CD8-positive, alpha-beta memory T cell (primary cell): ENCODE measurements at regions of chr5 and their contacts with region 1.

Region 1: DNA sequence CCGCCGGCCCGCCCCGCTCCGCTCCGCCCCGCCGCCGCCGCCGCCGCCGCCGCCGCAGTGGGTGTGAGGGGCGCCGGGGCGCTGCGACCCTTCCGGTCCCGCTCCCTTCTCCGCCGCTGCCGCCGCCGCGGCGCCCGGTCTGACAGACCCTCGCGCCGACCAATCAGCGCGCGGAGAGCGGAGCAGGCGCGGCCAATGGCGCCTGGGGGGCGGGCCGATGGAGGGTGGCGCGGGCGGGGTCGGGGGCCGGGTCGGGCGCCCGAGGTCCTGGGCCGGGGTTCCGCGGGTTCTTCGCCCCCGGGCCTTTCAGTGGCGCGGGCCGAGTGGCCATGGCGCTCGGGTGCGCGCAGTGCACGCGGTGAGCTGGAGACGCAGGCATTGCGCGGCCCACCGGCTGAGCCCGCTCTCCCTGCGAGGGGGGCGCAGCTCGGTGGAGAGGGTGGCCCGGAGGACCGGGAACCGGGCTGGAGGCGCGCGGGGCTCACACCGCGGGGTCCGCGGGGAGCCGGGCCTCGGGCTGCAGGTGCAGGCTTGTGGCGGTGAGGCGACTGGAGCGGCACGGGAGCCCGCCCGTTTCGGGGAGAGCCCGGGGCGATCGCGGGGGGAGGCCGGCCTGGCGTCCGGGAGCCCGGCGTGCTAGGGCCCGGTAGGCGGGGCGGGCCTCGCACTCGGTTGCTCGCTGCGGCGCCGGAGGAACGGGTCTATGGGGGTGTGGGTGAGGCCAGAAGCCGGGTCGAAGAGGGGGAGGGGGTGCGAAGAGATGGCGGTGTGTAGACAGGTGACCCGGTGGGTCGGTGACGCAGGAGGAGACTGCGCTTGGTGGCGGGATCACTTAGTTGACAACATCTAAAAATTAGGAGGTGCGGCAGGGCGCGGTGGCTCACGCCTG is at the start of gene MAPK9:
- DNase-seq: peak; percentile 82 to 92 (median 85)
- H3K4me3 ChIP-seq: peak within 1 kb of the TSS; percentile 59
- H3K4me3 Mint-ChIP-seq: peak within 1 kb of the TSS; percentile 93 to 99 (median 97)
- H3K27ac ChIP-seq: peak within 1 kb of the TSS; percentile 84
- H3K27ac Mint-ChIP-seq: peak within 1 kb of the TSS; percentile 97 to 100 (median 99)
- H3K4me1 ChIP-seq: peaks cover 29% of the 10 kb centered on the region
- H3K4me1 Mint-ChIP-seq: peaks cover 40 to 75% (median 64%) of the 10 kb centered on the region in 3 donors
- H3K27me3 ChIP-seq: no peaks in the 10 kb centered on the region
- H3K27me3 Mint-ChIP-seq: peaks cover 0 to 1% of the 10 kb centered on the region in 2 donors
- total RNA-seq, gene MAPK9: 44.3 to 46.2 TPM

Region 2: GRCh38 chr5:180253036-180253824 is 39.0 kb before region 1 on chr5:
- CTCF ChIA-PET with region 1: no interaction called
- POLR2A ChIA-PET with region 1: no interaction called
- DNase-seq: no peak
- H3K4me3 ChIP-seq: no peak overlapping the region
- H3K4me3 Mint-ChIP-seq: no peak overlapping the region
- H3K27ac ChIP-seq: no peak overlapping the region
- H3K27ac Mint-ChIP-seq: no peak overlapping the region
- H3K4me1 ChIP-seq: no peaks in the 10 kb centered on the region
- H3K4me1 Mint-ChIP-seq: no peaks in the 10 kb centered on the region
- H3K27me3 ChIP-seq: no peaks in the 10 kb centered on the region
- H3K27me3 Mint-ChIP-seq: peaks cover 0 to 1% of the 10 kb centered on the region in 2 donors

Region 3: DNA sequence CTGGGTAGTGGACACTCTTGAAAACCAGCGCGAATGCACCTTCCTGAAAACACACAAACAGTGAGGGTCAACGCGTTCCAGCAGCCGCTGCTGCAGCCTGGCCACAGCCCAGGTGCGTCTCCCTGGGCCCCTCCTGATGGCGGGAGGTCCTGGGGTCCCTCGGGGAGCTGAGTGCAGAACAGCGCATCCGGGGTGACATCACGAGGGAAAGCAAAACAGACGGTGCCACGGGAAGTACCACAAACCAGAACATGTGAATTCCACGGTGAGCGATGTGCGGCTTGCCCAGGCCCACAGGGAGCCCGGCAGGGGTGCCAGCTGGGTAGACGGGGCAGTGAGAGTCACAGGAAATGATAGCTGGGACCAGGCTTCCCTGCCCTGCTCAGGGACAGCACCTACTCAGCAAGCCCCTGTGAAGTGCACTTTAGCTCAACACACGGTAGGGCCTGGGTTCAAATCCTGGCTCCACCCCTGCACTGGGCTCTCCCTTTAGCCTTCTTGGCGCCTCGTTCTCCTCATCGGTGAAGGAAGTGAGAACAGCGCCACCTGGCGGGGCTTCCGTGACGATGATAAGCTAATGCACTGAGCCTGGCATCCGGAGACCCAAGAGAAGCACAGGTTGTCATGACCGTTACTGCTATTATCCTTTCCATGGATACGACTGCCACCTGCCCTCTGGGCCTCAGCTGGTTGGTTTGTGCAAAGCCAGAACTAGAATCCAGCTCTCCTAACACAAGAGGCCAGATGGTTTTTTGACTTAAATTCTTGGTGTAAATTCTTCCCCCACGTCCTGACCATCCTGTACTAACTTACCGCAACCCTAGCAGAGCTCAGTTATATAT is 36.3 kb after region 1 on chr5:
- CTCF ChIA-PET with region 1: interaction called, 44 read pairs
- POLR2A ChIA-PET with region 1: interaction called, 8 read pairs
- DNase-seq: peak; percentile 63 to 88 (median 78)
- H3K4me3 ChIP-seq: no peak overlapping the region
- H3K4me3 Mint-ChIP-seq: no peak overlapping the region
- H3K27ac ChIP-seq: no peak overlapping the region
- H3K27ac Mint-ChIP-seq: no peak overlapping the region
- H3K4me1 ChIP-seq: no peaks in the 10 kb centered on the region
- H3K4me1 Mint-ChIP-seq: peaks cover 1 to 4% (median 3%) of the 10 kb centered on the region in 3 donors
- H3K27me3 ChIP-seq: no peaks in the 10 kb centered on the region
- H3K27me3 Mint-ChIP-seq: peaks cover 6 to 8% of the 10 kb centered on the region in 2 donors

Region 4: DNA sequence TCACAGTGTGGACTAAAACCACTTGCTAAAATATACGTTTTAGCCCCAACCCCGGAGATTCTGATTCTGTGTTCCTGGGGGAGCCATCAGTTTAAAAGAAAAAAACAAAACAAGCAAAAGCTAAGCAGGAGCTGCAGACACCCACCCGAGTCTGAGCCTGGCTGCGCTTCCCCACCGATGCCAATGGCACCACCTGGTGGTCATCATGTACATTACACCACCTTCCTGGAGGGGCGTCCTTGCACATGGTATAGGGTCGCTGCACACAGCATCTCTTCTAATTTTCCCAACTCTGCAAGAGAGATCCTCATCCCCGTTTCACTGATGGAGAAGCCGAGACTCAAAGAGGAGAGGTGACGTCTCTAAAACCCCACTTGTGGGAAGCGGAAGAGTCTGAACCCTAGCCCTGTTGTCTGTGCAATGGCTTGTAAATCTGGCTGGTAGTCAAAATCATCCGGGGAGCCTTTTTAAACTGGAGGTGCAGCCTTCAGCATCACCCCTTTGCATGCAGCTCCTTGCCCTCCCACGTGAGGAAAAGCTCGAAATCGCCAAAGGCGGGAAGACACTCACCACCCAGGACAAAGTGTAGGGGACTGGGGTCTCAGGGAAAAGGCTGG is 178.9 kb after region 1 on chr5:
- CTCF ChIA-PET with region 1: interaction called, 17 read pairs
- POLR2A ChIA-PET with region 1: no interaction called
- DNase-seq: peak; percentile 41 to 76 (median 48)
- H3K4me3 ChIP-seq: no peak overlapping the region
- H3K4me3 Mint-ChIP-seq: peak overlapping the region in 1 of 7 donors; percentile 1
- H3K27ac ChIP-seq: no peak overlapping the region
- H3K27ac Mint-ChIP-seq: peak overlapping the region in 2 of 8 donors; percentile 17 to 23
- H3K4me1 ChIP-seq: no peaks in the 10 kb centered on the region
- H3K4me1 Mint-ChIP-seq: peaks cover 0 to 6% (median 2%) of the 10 kb centered on the region in 3 donors
- H3K27me3 ChIP-seq: no peaks in the 10 kb centered on the region
- H3K27me3 Mint-ChIP-seq: peaks cover 4 to 9% of the 10 kb centered on the region in 2 donors